ENCODE measurements at regions of chr1 and their contacts with region 1.

Region 1: DNA sequence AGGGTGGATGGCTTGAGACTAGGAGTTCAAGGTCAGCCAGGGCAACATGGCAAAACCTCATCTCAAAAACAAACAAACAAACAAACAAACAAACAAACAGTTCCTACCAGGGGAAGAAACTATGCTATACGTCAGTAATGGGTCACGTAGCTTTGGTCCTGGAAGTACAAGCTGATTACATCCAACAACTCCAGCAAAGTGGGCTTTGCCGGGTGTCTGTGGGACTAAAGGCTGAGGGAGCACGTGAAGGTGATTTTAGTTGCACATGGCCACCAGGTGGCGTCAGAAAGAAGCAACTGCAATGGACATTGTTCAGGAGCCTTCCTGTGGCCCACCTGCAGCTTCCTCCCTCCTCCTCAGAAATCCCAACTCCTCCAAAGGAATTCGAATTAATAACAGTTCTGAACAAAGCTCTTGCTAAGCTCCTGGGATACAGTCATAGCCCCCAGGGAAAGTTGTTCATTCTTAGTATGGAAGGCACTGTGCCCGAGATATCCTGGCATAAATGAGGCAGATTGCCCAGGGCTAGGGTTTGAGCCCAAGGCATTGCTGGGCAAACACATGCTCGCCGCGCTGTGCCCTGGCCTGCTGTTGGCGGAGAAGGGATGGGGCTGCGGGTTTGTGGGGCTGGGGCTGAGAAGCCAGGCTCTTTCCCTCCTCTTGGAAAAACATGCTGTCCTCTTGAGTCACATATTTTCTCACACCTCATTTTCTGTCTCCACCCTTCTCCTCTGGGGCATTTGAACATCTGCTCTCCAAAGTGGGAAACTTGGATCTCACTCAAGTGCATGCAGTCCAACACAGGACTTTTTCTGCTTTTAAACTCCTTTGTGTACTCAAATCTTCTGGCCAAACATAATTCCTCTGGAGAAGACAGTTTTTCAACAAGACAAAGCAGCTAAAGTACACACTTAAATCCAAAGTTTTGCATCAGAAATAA is 28.6 kb downstream of the AKNAD1 start:
- DNase-seq: no peak
- H3K4me3 ChIP-seq: peak overlapping the region in 1 of 4 donors; percentile 46
- H3K27ac ChIP-seq: peak overlapping the region; percentile 70 to 93 (median 86)
- H3K4me1 ChIP-seq: peaks cover 22 to 84% (median 36%) of the 10 kb centered on the region in 3 donors
- H3K27me3 ChIP-seq: no peaks in the 10 kb centered on the region
- CTCF ChIP-seq: peak; percentile 50 to 88 (median 77)
- POLR2A ChIP-seq: no peak

Region 2: DNA sequence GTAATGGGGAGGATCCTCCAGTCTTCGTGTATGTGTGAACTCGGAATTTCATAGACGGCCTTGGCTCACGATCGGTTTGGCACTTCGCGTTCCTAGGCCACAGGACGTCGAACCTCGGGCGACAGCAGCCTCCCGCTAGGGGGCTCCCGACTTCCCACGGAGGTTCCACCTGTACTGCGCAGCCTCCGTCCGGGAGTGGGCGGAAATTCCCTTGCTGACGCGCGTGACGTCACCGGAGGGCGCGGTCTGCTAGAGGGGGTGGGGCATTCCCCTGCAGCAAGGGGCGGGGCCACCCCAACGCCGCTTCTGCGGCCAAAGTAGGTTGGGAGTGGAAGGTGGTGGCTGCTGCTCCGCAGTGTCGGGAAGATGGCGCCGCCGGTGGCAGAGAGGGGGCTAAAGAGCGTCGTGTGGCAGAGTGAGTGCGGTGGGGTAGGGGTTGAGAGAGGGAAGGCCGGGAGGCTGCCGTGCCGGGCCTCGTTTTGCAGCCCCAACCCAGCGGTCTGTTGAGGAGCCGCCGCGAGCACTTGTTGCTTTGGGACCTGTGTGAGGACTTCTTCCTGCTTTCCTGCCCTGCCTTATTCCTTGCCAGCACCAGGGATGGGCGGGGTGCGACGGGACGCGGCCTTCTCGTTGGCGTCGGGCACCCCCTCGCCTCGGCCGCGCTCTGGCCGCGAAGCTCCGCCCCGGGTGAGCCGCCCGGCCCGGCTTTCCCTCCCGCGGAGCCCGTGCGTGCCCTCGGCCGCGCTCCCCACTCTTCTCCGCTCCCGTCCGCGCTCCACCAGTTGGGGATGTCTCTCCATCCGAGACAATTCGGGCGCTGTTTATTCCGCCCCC is 81.7 kb before region 1 on chr1 and contains the start of gene STXBP3:
- intact Hi-C with region 1: no loop called
- DNase-seq: peak; percentile 92
- H3K4me3 ChIP-seq: peak within 1 kb of the TSS; percentile 74 to 99 (median 84)
- H3K27ac ChIP-seq: peak within 1 kb of the TSS; percentile 97 to 100 (median 98)
- H3K4me1 ChIP-seq: peaks cover 5 to 42% (median 15%) of the 10 kb centered on the region in 3 donors
- H3K27me3 ChIP-seq: no peaks in the 10 kb centered on the region
- CTCF ChIP-seq: peak; percentile 90 to 98 (median 94)
- POLR2A ChIP-seq: peak in 3 of 4 donors; percentile 97 to 100 (median 99)
- total RNA-seq, gene STXBP3: 31.3 to 79.9 (median 45.3) TPM

Region 3: GRCh38 chr1:108897865-108898720 is 69.8 kb after region 1 on chr1:
- intact Hi-C with region 1: loop called (anchors 5 kb)
- DNase-seq: no peak
- H3K4me3 ChIP-seq: no peak overlapping the region
- H3K27ac ChIP-seq: peak overlapping the region in 2 of 4 donors; percentile 13 to 62
- H3K4me1 ChIP-seq: peaks cover 0 to 34% (median 0%) of the 10 kb centered on the region in 3 donors
- H3K27me3 ChIP-seq: no peaks in the 10 kb centered on the region
- CTCF ChIP-seq: peak; percentile 15 to 86 (median 74)
- POLR2A ChIP-seq: no peak

Measured in esophagus squamous epithelium (tissue), 5 donors.